MCF 10A (cell line): ENCODE measurements at regions of chr20 and their contacts with region 1.

Region 1: DNA sequence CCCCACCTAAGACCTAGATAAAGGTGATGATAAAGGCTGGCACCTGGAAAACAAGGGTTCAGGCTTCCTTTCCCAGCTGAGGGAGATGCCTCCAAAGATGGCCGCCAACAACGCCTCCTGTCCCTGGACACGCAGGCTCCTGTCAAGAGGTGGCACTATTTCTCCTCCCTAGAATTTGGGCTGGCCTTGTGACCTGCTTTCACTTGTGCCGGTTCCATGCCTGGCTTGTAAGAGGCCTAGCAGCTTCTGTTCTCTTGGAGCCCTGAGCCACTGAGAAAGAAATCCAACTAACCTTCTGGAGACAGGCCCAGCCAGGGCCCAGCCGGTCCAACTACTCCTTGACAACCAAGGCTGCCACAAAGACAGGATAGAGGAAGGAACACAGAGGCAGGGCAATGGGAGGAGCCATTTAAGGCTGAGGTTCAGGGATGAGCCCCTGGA is 60.2 kb upstream of the RALY start:
- DNase-seq: peak; percentile 79
- H3K4me3 Mint-ChIP-seq: no peak overlapping the region
- H3K27ac Mint-ChIP-seq: no peak overlapping the region
- H3K4me1 Mint-ChIP-seq: peaks cover 5% of the 10 kb centered on the region
- H3K27me3 Mint-ChIP-seq: peaks cover 16% of the 10 kb centered on the region
- CTCF ChIP-seq: peak; percentile 64

Region 2: GRCh38 chr20:34022154-34022838 is 88.8 kb after region 1 on chr20:
- CTCF ChIA-PET with region 1: no interaction called
- POLR2A ChIA-PET with region 1: no interaction called
- intact Hi-C with region 1: loop called (anchors 1 kb)
- DNase-seq: peak; percentile 45
- H3K4me3 Mint-ChIP-seq: no peak overlapping the region
- H3K27ac Mint-ChIP-seq: no peak overlapping the region
- H3K4me1 Mint-ChIP-seq: peaks cover 29% of the 10 kb centered on the region
- H3K27me3 Mint-ChIP-seq: no peaks in the 10 kb centered on the region
- CTCF ChIP-seq: peak; percentile 32

Region 3: DNA sequence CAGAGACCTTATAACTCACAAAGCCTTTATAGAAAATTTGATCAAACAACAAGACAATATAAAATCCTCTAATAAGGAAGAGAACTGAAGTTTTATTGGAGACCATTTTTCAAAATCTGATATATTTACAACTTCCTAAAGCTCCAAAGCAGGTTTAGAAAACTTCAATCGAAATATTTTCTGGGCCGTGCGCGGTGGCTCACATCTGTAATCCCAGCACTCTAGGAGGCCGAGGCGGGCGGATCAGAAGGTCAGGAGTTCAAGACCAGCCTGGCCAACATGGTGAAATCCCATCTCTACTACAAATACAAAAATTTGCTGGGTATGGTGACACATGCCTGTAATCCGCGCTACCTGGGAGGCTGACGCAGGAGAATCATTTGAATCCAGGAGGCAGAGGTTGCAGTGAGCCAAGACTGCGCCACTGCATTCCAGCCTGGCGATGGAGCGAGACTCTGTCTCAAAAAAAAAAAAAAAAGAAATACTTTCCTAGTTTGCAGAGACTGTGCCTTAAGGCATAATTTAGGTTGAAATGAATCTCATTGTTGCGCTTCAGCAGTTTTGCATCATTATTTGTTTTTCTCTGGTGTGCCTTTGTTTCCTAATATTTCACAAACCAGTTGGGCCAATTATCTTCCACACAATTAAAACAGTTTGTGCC is 247.1 kb after region 1 on chr20:
- CTCF ChIA-PET with region 1: no interaction called
- POLR2A ChIA-PET with region 1: no interaction called
- intact Hi-C with region 1: no loop called
- DNase-seq: peak; percentile 31
- H3K4me3 Mint-ChIP-seq: no peak overlapping the region
- H3K27ac Mint-ChIP-seq: no peak overlapping the region
- H3K4me1 Mint-ChIP-seq: peaks cover 12% of the 10 kb centered on the region
- H3K27me3 Mint-ChIP-seq: peaks cover 22% of the 10 kb centered on the region
- CTCF ChIP-seq: no peak